ENCODE measurements at regions of chr9 and their contacts with region 1.

Region 1: GRCh38 chr9:132250324-132251262 is 88.7 kb downstream of the NTNG2 start:
- DNase-seq: no peak
- H3K4me3 ChIP-seq: no peak overlapping the region
- H3K27ac ChIP-seq: no peak overlapping the region
- H3K4me1 ChIP-seq: peaks cover 10% of the 10 kb centered on the region
- H3K27me3 ChIP-seq: peaks cover 45% of the 10 kb centered on the region
- CTCF ChIP-seq: no peak

Region 2: GRCh38 chr9:131762356-131762932 is 488.1 kb before region 1 on chr9:
- intact Hi-C with region 1: loop called (anchors 5 kb)
- DNase-seq: peak; percentile 75
- H3K4me3 ChIP-seq: no peak overlapping the region
- H3K27ac ChIP-seq: no peak overlapping the region
- H3K4me1 ChIP-seq: peaks cover 8% of the 10 kb centered on the region
- H3K27me3 ChIP-seq: peaks cover 41% of the 10 kb centered on the region
- CTCF ChIP-seq: peak; percentile 96

Measured in left ventricle myocardium inferior (tissue), 1 donor.